ENCODE measurements at regions of chr7 and their contacts with region 1.

Region 1: DNA sequence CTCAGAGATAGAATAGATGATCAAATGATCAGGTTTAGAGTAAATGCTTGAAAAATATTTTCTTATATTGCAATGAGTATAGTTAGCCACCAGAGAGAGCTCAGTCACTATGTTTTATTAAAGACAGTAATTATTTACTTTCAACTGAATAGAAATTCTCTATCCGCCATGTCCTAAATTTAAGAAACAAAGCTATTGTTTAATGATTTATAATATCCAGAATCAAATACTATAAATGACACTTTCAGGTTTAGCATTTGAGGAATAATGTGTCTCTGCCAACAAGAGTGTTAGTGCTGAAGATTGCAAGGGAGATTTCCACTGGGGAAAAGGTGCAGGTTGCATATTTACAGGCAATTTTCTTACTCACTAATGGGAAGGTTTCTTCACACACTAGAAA is 184.7 kb downstream of the DGKB start:
- DNase-seq: no peak
- ATAC-seq: peak in 1 of 4 donors; percentile 62
- H3K4me3 ChIP-seq: no peak overlapping the region
- H3K27ac ChIP-seq: no peak overlapping the region
- H3K4me1 ChIP-seq: no peaks in the 10 kb centered on the region
- H3K27me3 ChIP-seq: no peaks in the 10 kb centered on the region
- CTCF ChIP-seq: peak; percentile 36 to 77 (median 64)
- POLR2A ChIP-seq: no peak

Region 2: DNA sequence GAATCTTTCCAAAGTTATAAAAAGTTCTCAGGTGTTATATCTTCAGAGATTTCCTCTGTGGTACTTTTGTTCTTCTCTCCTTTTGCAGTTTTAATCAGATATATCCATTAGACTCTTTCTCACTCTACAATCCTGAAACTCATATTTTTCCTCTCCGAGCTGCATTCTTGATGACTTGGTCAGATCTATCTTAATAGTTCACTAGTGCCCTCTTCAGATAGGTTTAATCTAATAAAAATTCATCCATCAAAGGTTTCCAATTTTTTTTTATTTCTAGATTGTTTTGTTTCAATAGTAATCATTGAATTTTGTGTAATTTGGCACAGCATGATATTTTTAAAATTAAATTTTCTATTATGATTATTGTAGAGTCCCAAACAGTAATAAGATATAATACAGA is 206.6 kb after region 1 on chr7:
- intact Hi-C with region 1: loop called in 6 of 10 experiments (anchors 2 to 10 kb)
- DNase-seq: no peak
- ATAC-seq: no peak
- H3K4me3 ChIP-seq: no peak overlapping the region
- H3K27ac ChIP-seq: no peak overlapping the region
- H3K4me1 ChIP-seq: no peaks in the 10 kb centered on the region
- H3K27me3 ChIP-seq: no peaks in the 10 kb centered on the region
- CTCF ChIP-seq: peak in 4 of 12 donors; percentile 11 to 19 (median 16)
- POLR2A ChIP-seq: no peak

Region 3: DNA sequence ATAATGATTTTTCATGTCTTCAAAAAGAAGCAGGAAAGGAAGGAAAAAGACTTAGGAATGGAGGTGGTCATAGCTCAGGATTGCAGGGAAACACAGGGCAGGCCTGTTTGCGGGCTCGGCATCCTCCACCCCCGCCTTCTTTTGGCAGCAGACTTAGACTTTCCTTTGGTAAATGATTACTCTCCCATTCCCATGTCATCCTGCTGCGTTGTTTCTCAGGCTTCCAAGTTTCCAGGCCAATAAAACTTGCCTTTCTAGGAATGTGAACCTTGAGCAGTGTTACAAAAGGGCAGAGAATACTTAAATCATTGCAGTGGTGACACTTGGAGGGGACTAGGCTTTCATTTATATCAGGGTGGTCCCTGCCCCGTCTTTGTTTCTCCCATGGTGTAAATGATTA is 218.7 kb after region 1 on chr7:
- intact Hi-C with region 1: loop called in 1 of 10 experiments (anchors 10 kb)
- DNase-seq: peak in 1 of 5 donors; percentile 7
- ATAC-seq: no peak
- H3K4me3 ChIP-seq: no peak overlapping the region
- H3K27ac ChIP-seq: no peak overlapping the region
- H3K4me1 ChIP-seq: no peaks in the 10 kb centered on the region
- H3K27me3 ChIP-seq: no peaks in the 10 kb centered on the region
- CTCF ChIP-seq: no peak
- POLR2A ChIP-seq: no peak

Region 4: DNA sequence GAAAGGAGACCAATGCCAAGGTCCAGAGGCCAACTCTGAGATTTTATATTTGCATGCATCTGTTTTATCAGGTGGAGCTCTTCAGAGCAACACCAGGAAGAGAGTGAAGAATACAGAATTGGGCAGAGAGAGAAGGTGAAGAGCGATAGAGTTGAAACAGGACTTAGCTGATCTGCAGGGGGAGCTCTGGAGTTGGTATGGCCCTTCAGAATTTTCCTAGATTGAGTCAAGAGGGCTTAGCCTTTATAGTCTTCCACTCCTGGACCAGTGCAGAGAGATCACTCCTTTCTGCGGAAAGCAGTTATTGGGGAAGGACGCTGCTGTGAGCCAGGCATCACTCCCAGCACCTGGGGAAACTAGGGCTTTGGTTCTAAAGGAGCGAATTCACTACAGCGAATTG is 289.7 kb after region 1 on chr7:
- intact Hi-C with region 1: loop called in 1 of 10 experiments (anchors 5 kb)
- DNase-seq: no peak
- ATAC-seq: no peak
- H3K4me3 ChIP-seq: no peak overlapping the region
- H3K27ac ChIP-seq: no peak overlapping the region
- H3K4me1 ChIP-seq: peaks cover 0 to 7% (median 0%) of the 10 kb centered on the region in 12 donors
- H3K27me3 ChIP-seq: no peaks in the 10 kb centered on the region
- CTCF ChIP-seq: no peak
- POLR2A ChIP-seq: no peak

Region 5: DNA sequence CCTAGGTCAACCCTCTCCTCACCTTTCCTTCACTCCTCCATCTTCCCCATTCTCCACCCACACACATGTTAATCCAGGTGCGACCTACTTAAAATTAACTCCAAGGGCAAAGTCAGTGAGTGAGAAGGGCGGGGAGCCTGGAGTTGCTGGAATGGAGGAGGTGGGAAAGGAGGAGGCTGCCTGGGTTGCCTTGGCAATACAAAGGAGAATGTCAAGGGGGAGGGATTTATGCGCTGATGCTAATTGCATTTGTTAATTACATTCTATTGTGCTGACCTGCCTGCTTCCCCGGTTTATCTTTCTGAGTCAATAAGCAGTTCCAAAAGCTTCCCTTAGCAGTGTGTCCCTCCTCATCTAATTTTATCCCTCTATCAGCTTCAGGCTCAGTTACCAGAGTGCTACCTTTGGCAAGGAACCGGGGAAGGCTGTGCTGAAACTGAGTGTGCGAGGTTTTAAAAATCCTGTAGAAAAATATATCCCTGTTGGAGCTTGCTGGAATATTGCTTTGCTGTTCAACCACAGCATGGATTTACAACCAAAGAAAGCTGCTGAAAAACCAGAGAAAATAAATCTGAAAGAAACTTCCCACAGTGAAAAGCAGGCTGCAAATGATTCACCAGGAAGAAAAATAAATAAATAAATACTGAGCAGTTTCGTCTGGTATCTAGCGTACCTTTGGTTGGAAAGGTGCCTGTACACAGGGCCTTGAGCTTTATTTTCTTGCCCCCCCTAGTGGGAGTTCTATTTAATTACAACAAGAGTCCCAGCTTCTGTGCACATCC is 297.9 kb after region 1 on chr7:
- intact Hi-C with region 1: loop called in 9 of 10 experiments (anchors 1 to 5 kb)
- DNase-seq: peak in 4 of 5 donors; percentile 24 to 38 (median 32)
- ATAC-seq: peak; percentile 87 to 93 (median 89)
- H3K4me3 ChIP-seq: peak overlapping the region in 8 of 12 donors; percentile 7 to 49 (median 40)
- H3K27ac ChIP-seq: peak overlapping the region in 10 of 12 donors; percentile 13 to 75 (median 54)
- H3K4me1 ChIP-seq: peaks cover 0 to 18% (median 0%) of the 10 kb centered on the region in 12 donors
- H3K27me3 ChIP-seq: no peaks in the 10 kb centered on the region
- CTCF ChIP-seq: peak; percentile 55 to 81 (median 72)
- POLR2A ChIP-seq: no peak

Region 6: DNA sequence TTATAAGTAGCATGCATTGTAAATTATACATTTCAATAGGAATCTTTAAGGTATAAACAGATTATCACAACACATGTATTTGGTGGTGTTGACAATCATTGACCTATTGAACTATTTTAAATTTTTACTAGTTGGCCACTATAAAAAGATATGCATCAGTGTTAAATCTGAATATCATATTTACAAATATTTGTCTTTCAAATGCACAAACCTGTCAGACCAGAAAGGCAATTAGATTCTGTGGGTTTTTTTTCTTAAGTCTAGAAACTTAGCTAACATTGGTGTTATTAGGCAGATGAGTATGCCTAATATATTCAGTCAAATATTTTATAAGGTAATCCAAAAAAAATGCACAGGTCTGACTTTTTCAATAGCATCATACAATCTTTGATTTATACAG is 426.1 kb after region 1 on chr7:
- intact Hi-C with region 1: no loop called
- DNase-seq: no peak
- ATAC-seq: no peak
- H3K4me3 ChIP-seq: no peak overlapping the region
- H3K27ac ChIP-seq: no peak overlapping the region
- H3K4me1 ChIP-seq: no peaks in the 10 kb centered on the region
- H3K27me3 ChIP-seq: no peaks in the 10 kb centered on the region
- CTCF ChIP-seq: no peak
- POLR2A ChIP-seq: no peak

Region 7: DNA sequence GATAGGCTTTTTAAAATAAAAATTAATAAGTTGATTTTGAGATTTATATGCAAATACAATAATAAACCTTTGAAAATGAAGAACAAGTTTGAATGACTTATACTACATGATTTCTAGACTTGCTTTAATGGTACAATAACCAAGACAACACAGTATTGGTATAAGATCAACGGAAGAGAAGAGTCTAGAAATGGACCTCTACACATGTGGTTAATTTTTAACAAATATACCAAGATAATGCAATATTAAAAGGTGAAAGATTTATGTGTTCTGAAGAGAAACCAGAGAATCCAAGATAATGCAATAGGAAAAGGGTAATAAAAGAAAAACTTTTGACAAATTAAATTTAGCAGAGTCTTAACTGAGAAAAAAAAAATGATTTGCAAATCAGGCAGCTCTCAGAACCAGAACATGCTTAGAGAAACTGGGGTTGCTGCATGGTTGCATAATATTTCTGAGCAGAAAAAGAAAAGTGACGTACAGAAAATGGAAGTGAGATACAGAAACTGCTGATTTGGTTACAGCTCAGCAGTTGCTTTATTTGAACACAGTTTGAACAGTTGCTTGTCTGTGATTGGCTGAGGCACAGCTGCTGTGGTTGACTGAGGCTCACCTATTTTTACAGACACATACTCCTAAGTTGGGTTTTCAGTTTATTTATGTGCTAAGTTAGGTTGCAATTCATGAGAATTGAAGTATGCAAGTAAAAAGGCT is 1337.6 kb after region 1 on chr7:
- intact Hi-C with region 1: loop called in 1 of 10 experiments (anchors 10 kb)
- DNase-seq: no peak
- ATAC-seq: peak in 2 of 4 donors; percentile 38 to 39
- H3K4me3 ChIP-seq: no peak overlapping the region
- H3K27ac ChIP-seq: peak overlapping the region in 1 of 12 donors; percentile 15
- H3K4me1 ChIP-seq: peaks cover 0 to 17% (median 5%) of the 10 kb centered on the region in 12 donors
- H3K27me3 ChIP-seq: no peaks in the 10 kb centered on the region
- CTCF ChIP-seq: no peak
- POLR2A ChIP-seq: no peak